Activated CD4-positive, alpha-beta memory T cell treated with anti-CD3 and anti-CD28 coated beads for 36 hours (primary cell): ENCODE measurements at regions of chr9 and their contacts with region 1.

Region 1: GRCh38 chr9:77488439-77489126 is 159.5 kb downstream of the GNA14 start:
- DNase-seq: no peak
- H3K4me3 Mint-ChIP-seq: no peak overlapping the region
- H3K27ac Mint-ChIP-seq: no peak overlapping the region
- H3K4me1 Mint-ChIP-seq: peaks cover 17% of the 10 kb centered on the region
- H3K27me3 Mint-ChIP-seq: peaks cover 21% of the 10 kb centered on the region

Region 2: GRCh38 chr9:77433675-77434445 is 54.7 kb before region 1 on chr9:
- CTCF ChIA-PET with region 1: interaction called, 19 read pairs
- POLR2A ChIA-PET with region 1: no interaction called
- intact Hi-C with region 1: loop called (anchors 1 kb)
- DNase-seq: peak; percentile 65
- H3K4me3 Mint-ChIP-seq: no peak overlapping the region
- H3K27ac Mint-ChIP-seq: no peak overlapping the region
- H3K4me1 Mint-ChIP-seq: peaks cover 3% of the 10 kb centered on the region
- H3K27me3 Mint-ChIP-seq: no peaks in the 10 kb centered on the region

Region 3: GRCh38 chr9:77534376-77535057 is 45.9 kb after region 1 on chr9:
- CTCF ChIA-PET with region 1: no interaction called
- POLR2A ChIA-PET with region 1: no interaction called
- intact Hi-C with region 1: no loop called
- DNase-seq: no peak
- H3K4me3 Mint-ChIP-seq: no peak overlapping the region
- H3K27ac Mint-ChIP-seq: no peak overlapping the region
- H3K4me1 Mint-ChIP-seq: no peaks in the 10 kb centered on the region
- H3K27me3 Mint-ChIP-seq: peaks cover 2% of the 10 kb centered on the region